ENCODE measurements at regions of chr10 and their contacts with region 1.

Region 1: DNA sequence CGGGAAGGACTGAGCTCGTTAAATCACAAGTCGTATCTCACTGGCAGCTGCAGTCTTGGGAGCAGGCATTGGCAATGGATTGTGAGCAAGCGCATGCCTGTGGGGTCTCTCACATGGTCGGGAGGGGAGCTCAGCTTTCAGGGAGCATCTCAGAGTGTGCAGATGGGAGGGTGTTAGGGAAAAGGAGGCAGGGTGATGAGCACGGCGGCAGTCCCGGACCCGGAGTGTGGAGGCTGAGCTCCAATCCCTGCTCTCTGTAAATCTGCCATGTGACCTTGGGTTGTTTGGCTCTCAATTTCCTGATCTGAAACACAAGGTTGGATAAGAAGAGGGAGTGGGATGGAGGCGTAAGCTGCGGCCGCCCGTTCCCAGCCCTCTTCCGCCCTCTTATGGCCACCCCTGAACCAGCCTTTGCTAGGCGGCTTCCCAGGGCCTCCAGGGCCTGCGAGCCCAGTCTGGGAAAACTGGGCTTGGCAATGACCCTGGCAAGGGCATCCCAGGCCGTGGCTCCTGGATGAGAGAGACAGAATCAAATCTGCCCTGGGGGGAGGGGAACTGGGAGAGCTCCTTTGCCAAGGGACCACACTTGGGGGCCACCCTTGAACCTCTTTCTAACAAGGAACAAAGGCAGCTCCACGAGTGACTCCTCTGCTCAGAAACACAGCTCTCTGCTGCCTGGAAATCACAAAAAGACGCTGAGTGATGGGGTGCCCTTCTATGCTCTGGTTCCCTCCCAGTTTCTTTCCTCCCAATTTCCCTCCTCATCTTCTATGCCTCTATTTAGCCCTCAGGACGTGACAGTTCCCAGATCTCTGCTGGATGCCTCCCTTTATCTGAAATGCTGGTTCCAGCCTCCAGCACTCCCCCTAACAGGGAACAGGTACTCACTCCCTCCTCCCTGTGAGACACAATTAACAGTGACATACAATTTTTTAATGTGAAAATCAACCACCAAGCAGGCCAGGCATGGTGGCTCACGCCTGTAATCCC is 41.7 kb upstream of the LOXL4 start:
- DNase-seq: peak; percentile 61 to 84
- H3K4me3 ChIP-seq: peak overlapping the region in 1 of 2 donors; percentile 5
- H3K27ac ChIP-seq: no peak overlapping the region
- H3K4me1 ChIP-seq: peaks cover 0 to 28% (median 23%) of the 10 kb centered on the region in 4 donors
- H3K27me3 ChIP-seq: peaks cover 0 to 4% of the 10 kb centered on the region in 2 donors
- CTCF ChIP-seq: peak; percentile 87 to 89

Region 2: DNA sequence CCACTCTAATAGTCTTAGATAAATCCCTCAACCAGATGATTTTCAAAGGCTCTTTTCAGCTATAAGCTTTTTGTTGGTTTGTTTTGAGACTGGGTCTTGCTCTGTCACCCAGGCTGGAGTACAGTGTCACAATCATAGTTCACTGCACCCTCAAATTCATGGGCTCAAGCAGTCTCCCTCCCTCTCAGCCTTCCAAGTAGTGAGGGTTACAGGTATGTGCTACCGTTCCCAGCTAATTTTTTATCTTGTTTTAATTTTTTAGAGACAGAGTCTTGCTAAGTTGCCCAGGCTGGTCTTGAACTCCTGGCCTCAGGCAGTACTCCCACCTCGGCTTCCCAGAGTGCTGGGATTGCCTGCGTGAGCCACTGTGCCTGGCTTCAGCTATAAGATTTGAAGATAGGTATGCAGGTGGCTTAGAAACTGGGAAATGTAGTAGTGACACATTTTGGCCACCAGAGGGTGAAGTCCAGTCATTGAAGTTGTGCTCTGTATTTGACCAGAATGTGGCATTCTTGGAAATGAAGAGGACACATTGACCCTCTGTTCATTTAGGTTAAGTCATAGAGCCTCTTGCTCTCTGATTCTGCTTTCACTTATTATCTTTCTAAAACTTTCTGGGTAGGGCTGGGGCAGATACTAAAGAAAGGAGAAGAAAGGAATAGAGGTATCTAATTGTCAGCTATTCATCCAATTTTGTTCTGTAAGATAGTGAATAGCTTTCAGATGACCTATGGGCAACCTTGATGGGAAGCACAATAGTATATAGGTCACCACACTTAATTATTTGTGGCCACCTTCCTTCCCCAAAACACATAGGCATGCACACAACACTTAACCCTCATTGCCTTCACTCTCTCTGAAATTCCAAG is 139.2 kb before region 1 on chr10:
- intact Hi-C with region 1: loop called (anchors 5 kb)
- DNase-seq: peak in 1 of 2 donors; percentile 27
- H3K4me3 ChIP-seq: no peak overlapping the region
- H3K27ac ChIP-seq: no peak overlapping the region
- H3K4me1 ChIP-seq: peaks cover 0 to 17% (median 7%) of the 10 kb centered on the region in 4 donors
- H3K27me3 ChIP-seq: no peaks in the 10 kb centered on the region
- CTCF ChIP-seq: peak; percentile 71 to 78

Region 3: GRCh38 chr10:98246911-98247805 is 62.5 kb before region 1 on chr10:
- intact Hi-C with region 1: loop called (anchors 5 kb)
- DNase-seq: no peak
- H3K4me3 ChIP-seq: no peak overlapping the region
- H3K27ac ChIP-seq: no peak overlapping the region
- H3K4me1 ChIP-seq: peaks cover 0 to 14% (median 0%) of the 10 kb centered on the region in 4 donors
- H3K27me3 ChIP-seq: no peaks in the 10 kb centered on the region
- CTCF ChIP-seq: no peak

Region 4: DNA sequence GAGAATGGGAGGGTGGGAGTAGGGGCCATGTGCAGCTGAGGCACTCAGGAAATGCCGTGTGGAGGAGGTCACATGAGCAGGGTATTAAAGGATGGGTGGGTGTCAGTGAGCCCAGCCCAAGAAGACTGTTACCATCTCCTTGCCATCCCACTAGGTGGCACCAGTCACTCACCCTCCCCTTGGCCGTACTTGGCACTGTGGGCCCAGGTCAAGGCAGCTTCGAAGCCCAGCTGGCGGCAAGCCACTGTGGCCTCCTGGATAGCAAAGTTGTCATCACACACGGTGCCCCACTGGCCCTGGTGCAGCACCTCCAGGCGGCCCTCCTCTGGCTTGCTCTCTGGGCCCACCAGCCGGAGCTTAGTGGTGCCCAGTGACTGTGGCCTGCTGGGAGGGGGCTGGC is 47.1 kb before region 1 on chr10:
- intact Hi-C with region 1: loop called (anchors 5 kb)
- DNase-seq: no peak
- H3K4me3 ChIP-seq: no peak overlapping the region
- H3K27ac ChIP-seq: no peak overlapping the region
- H3K4me1 ChIP-seq: peaks cover 0 to 47% (median 31%) of the 10 kb centered on the region in 4 donors
- H3K27me3 ChIP-seq: no peaks in the 10 kb centered on the region
- CTCF ChIP-seq: peak; percentile 37 to 45